Head of caudate nucleus (tissue), 42 donors: ENCODE measurements at regions of chr9 and their contacts with region 1.

Region 1: DNA sequence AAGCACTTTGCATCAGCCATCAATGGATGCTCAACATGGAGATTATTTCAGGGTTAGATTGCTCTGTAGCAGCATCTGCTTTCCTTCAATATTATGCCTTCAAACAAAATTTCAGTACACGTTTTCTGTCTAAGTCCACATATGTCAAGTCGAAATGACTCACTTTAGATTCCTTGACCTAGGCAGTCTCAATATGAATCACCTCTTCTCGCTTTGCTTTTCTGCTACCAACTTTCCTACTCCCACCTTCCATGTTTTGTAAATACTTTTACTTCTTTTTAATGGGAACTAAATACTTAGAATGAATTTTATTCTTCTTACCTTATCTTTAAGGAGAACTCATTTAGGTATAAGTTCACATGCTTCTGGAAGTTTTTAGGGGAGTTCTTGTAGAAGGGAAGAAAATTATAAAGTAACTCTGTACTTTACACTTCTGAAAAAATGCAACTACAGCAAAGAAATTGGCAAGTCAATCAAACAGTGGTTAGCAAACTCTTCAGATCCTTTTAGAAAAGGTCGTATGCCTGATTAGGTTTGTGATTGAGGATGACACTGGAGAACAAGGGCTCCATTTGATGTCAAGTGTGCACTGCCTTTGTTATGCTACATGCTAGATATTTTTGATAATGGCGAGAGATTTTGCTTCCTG is 478.5 kb upstream of the SMARCA2 start:
- DNase-seq: no peak

Region 2: DNA sequence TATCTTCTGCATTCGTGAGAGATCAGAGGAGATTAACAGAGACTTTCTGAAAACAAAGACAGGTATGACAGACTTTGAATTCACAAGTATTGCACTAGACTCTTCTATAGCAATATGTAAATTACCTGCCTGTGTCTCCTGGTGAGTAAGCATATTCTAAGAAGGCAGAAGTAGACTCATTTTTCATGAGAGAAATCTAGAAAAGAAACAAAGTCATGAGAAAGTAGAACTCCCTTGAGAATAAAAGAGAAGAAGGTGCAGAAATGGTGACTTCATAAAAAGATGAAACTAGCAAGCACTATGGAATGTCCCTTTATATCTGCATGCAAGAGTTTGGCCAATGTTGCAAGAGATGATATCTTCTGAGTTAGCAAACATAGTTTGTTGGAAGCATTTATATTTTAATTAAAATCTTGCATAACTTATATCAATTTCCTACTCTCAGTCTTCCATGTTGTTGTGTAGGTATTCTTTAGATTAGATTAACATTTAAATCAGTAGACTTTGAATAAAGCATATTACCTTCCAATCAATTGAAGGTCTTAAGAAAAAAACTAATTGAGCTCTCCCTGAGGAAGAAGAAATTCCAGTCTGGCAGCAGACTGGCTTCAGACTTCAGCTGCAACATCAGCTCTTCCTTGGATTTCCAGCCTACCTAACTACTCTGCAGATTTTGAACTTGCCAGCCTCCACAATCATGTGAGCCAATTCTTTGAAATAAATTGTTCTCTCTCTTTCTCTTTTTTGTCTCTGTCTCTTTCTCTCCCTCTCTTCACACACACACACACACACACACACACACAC is 66.4 kb before region 1 on chr9:
- intact Hi-C with region 1: loop called (anchors 10 kb)
- DNase-seq: no peak

Region 3: DNA sequence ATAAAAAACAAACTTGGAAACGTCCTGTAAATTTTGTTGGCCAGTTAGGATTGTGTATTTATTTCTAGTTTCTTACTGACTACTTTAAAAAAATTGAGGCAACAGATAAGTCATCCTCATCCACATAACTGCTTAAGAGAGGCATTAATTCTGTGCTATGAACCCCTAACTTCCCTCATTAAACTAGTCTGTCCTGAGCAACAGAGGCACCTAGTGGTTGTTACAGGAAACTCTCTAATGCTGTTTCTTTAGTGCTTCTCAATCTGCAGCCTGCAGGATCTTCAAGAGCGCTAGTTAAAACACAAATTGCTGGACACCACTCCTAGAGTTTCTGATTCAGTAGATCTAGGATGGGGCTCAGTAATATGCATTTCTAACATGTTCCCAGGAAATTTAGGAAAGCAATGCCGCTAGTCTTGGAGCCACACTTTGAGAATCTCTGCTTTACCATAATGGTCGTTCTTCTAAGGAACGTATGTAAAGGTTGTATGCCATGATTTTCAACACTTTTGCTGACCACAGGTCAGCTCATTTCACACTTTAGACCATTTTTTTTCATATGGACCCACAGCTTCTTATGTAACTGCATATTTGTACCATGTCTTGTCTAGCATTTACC is 68.4 kb after region 1 on chr9:
- intact Hi-C with region 1: no loop called
- DNase-seq: peak in 1 of 42 donors; percentile 10

Region 4: DNA sequence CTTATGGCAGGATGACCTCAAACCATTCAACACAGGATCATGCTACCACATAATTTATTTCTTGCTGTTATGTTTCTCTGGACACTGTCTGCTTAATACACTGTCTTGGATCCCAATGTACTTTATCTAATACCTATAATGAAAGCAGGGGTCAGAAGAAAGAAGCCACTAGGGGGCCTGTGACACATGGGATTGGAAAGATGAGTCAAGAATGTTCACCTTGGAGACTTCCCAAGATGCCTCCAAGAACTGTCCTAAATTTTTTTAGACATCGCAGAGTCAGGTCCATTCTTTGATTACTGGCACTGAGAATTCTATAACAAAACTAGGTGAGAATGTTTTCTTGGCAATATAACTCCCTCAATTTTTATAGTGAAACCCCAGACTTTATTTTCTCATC is 172.7 kb after region 1 on chr9:
- intact Hi-C with region 1: no loop called
- DNase-seq: peak in 2 of 42 donors; percentile 1 to 9